ENCODE measurements at regions of chr1 and their contacts with region 1.

Region 1: DNA sequence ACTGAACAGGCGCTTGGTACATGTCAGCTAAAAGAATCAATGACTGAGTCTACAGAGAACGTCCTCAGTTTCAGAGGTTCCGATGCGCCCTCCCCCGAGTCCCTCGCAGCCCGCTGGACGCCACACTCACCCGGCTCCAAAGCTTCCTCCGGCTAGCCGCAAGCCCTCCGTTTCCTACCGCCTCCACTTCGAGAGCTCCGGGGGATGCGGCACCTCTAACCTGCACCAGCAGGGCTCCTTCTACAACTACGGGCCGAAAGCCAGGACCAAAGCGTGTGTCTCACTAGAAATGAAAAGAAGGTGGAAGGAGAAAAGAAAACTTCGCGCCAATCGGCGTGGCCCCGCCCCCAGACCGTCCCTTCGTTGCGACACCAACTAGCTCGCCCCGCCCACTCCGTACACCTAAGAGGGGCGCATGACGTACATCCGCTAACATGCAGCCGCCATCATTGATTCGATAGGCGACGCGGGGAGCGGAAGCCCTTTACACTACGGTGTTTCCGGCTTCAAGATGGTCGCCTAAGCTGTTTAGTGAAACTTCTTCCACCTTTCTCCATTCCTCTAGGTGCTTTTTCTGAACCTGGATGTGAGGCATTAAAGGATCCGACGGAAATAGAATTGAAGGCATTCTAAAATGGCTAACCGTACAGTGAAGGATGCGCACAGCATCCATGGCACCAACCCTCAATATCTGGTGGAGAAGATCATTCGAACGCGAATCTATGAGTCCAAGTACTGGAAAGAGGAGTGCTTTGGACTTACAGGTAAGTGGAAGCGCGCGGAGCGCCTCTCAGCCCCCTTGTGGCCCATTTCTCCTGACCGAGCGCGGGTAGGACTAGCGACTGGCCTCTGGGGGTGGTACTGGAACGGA is at the starts of genes ORC1 and PRPF38A:
- DNase-seq: peak; percentile 96 to 100
- ATAC-seq: peak; percentile 92 to 97 (median 94)
- H3K4me3 ChIP-seq: peak within 1 kb of the TSS; percentile 72
- H3K4me3 Mint-ChIP-seq: peak within 1 kb of the TSS; percentile 100
- H3K27ac ChIP-seq: peak within 1 kb of the TSS; percentile 87
- H3K27ac Mint-ChIP-seq: peak within 1 kb of the TSS; percentile 95 to 98
- H3K4me1 ChIP-seq: peaks cover 10% of the 10 kb centered on the region
- H3K4me1 Mint-ChIP-seq: peaks cover 34 to 50% of the 10 kb centered on the region in 2 donors
- H3K27me3 ChIP-seq: no peaks in the 10 kb centered on the region
- H3K27me3 Mint-ChIP-seq: no peaks in the 10 kb centered on the region
- CTCF ChIP-seq: peak; percentile 47
- total RNA-seq, gene ORC1: 1.9 to 2.6 (median 2.1) TPM
- total RNA-seq, gene PRPF38A: 73.9 to 97.2 (median 95.4) TPM

Region 2: GRCh38 chr1:52365746-52366516 is 38.4 kb before region 1 on chr1 and contains the start of gene CC2D1B:
- intact Hi-C with region 1: loop called (anchors 1 kb)
- DNase-seq: peak; percentile 99 to 100
- ATAC-seq: peak; percentile 86 to 96 (median 91)
- H3K4me3 ChIP-seq: peak within 1 kb of the TSS; percentile 75
- H3K4me3 Mint-ChIP-seq: peak within 1 kb of the TSS; percentile 90
- H3K27ac ChIP-seq: peak within 1 kb of the TSS; percentile 92
- H3K27ac Mint-ChIP-seq: peak within 1 kb of the TSS; percentile 95 to 99
- H3K4me1 ChIP-seq: peaks cover 30% of the 10 kb centered on the region
- H3K4me1 Mint-ChIP-seq: peaks cover 15 to 39% of the 10 kb centered on the region in 2 donors
- H3K27me3 ChIP-seq: no peaks in the 10 kb centered on the region
- H3K27me3 Mint-ChIP-seq: peaks cover 0 to 4% of the 10 kb centered on the region in 2 donors
- CTCF ChIP-seq: no peak
- total RNA-seq, gene CC2D1B: 61.4 to 78.4 (median 68.8) TPM

Region 3: DNA sequence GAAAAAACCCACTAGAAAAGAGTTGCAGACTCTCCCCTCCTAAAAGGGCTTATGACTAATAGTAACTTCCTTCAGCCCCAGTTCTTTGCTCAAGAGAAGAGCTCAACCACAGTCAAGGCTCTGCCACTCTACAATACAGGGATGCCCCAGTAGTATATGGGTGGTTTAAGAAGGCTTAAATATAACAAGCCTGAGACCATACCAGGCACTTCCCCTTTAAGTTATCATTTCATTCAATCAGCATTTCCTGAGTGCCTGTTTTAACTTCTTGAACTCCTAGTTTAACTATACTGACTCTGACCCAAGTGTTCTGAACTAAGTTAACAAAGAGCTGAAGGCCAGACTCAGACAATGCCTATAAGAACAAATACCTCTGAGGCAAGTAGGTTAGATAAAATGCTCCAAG is 19.9 kb after region 1 on chr1:
- intact Hi-C with region 1: loop called (anchors 1 kb)
- DNase-seq: peak in 1 of 2 donors; percentile 76
- ATAC-seq: peak; percentile 82 to 90 (median 82)
- H3K4me3 ChIP-seq: no peak overlapping the region
- H3K4me3 Mint-ChIP-seq: peak overlapping the region; percentile 85
- H3K27ac ChIP-seq: peak overlapping the region; percentile 82
- H3K27ac Mint-ChIP-seq: peak overlapping the region; percentile 86 to 98
- H3K4me1 ChIP-seq: peaks cover 9% of the 10 kb centered on the region
- H3K4me1 Mint-ChIP-seq: peaks cover 16 to 26% of the 10 kb centered on the region in 2 donors
- H3K27me3 ChIP-seq: no peaks in the 10 kb centered on the region
- H3K27me3 Mint-ChIP-seq: no peaks in the 10 kb centered on the region
- CTCF ChIP-seq: no peak

Region 4: GRCh38 chr1:52552505-52553361 is 148.4 kb after region 1 on chr1 and contains the start of gene TUT4:
- intact Hi-C with region 1: loop called (anchors 1 kb)
- DNase-seq: peak; percentile 60 to 85
- ATAC-seq: peak; percentile 41 to 62 (median 51)
- H3K4me3 ChIP-seq: peak within 1 kb of the TSS; percentile 99
- H3K4me3 Mint-ChIP-seq: no peak within 1 kb of the TSS
- H3K27ac ChIP-seq: peak within 1 kb of the TSS; percentile 95
- H3K27ac Mint-ChIP-seq: peak within 1 kb of the TSS in 1 of 2 donors; percentile 72
- H3K4me1 ChIP-seq: peaks cover 13% of the 10 kb centered on the region
- H3K4me1 Mint-ChIP-seq: peaks cover 19 to 24% of the 10 kb centered on the region in 2 donors
- H3K27me3 ChIP-seq: no peaks in the 10 kb centered on the region
- H3K27me3 Mint-ChIP-seq: no peaks in the 10 kb centered on the region
- CTCF ChIP-seq: no peak
- total RNA-seq, gene TUT4: 124 to 156 (median 125) TPM

Region 5: GRCh38 chr1:52636721-52637695 is 232.7 kb after region 1 on chr1:
- intact Hi-C with region 1: loop called (anchors 1 kb)
- DNase-seq: peak; percentile 56 to 87
- ATAC-seq: peak; percentile 49 to 80 (median 72)
- H3K4me3 ChIP-seq: no peak overlapping the region
- H3K4me3 Mint-ChIP-seq: peak overlapping the region; percentile 82
- H3K27ac ChIP-seq: peak overlapping the region; percentile 97
- H3K27ac Mint-ChIP-seq: peak overlapping the region; percentile 96 to 98
- H3K4me1 ChIP-seq: peaks cover 83% of the 10 kb centered on the region
- H3K4me1 Mint-ChIP-seq: peaks cover 76 to 88% of the 10 kb centered on the region in 2 donors
- H3K27me3 ChIP-seq: no peaks in the 10 kb centered on the region
- H3K27me3 Mint-ChIP-seq: no peaks in the 10 kb centered on the region
- CTCF ChIP-seq: no peak

Region 6: DNA sequence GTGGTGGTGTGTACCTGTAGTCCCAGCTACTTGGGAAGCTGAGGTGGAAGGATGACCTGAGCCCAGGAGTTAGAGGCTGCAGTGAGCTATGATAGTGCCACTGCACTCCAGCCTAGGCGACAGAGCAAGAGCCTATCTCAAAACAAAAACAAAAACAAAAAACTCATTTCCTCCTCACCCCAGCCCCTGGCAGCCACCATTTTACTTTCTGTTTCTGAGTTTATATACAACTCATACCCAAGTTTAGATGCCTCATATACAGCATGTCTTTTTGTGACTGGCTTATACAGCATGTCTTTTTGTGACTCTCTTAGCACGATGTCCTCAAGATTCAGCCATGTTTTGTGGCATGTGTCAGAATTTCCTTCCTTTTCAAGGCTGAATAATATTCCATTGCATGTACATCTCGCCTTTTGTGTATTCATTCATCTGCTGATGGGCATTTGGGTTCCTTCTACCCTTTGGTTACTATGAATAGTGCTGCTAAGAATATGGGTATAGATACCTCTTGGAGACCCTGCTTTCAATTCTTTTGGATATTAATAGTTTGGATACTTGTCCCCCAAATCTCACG is 279.1 kb after region 1 on chr1:
- intact Hi-C with region 1: loop called (anchors 5 kb)
- DNase-seq: no peak
- ATAC-seq: no peak
- H3K4me3 ChIP-seq: no peak overlapping the region
- H3K4me3 Mint-ChIP-seq: no peak overlapping the region
- H3K27ac ChIP-seq: no peak overlapping the region
- H3K27ac Mint-ChIP-seq: peak overlapping the region in 1 of 2 donors; percentile 28
- H3K4me1 ChIP-seq: peaks cover 11% of the 10 kb centered on the region
- H3K4me1 Mint-ChIP-seq: peaks cover 7 to 14% of the 10 kb centered on the region in 2 donors
- H3K27me3 ChIP-seq: no peaks in the 10 kb centered on the region
- H3K27me3 Mint-ChIP-seq: no peaks in the 10 kb centered on the region
- CTCF ChIP-seq: no peak

Region 7: DNA sequence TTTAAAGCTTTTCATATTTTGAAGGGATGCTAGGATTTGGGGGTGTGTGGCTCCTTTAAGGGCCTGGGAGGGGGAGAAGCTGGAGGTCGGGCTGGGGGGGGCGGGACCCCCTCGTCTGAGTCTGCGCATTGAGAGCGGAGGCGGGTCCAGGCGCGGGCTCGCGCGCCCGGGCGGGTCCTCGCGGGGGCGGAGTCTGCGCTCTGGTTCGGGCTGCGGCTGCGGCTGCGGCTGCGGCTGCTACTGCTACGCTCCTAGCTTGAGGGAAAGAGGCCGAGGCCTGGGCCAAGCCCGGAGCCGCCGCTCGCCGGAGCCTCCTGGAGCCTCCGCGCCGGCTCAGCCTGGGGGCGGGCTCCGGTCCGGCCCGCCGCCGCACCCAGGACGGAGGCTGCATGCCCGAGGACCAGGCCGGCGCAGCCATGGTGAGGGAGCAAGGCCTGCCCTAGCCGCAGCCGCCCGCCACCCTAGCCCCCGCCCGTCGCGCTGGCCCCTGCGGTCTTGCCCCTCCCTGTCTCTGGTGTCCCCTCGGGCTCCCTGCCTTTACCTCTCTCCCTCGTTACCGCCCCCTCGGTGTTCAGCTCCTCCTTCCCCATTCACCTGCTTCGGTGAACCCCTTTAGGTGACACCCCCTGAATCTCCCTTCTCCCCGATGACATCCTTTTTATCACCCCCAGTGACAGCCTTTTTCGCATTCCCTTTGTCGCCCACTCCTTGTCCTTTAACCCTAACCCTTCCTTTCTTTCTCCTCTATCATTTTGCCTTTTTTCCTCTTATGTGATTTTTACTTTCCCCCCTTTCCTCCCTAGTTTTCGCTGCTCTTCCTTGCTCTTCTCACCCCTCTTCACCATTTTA is 322.1 kb after region 1 on chr1 and contains the start of gene ZYG11B:
- intact Hi-C with region 1: loop called (anchors 1 kb)
- DNase-seq: peak; percentile 89 to 95
- ATAC-seq: peak; percentile 93 to 96 (median 95)
- H3K4me3 ChIP-seq: peak within 1 kb of the TSS; percentile 74
- H3K4me3 Mint-ChIP-seq: peak within 1 kb of the TSS; percentile 89
- H3K27ac ChIP-seq: peak within 1 kb of the TSS; percentile 26
- H3K27ac Mint-ChIP-seq: peak within 1 kb of the TSS; percentile 14 to 93
- H3K4me1 ChIP-seq: peaks cover 12% of the 10 kb centered on the region
- H3K4me1 Mint-ChIP-seq: peaks cover 23 to 29% of the 10 kb centered on the region in 2 donors
- H3K27me3 ChIP-seq: no peaks in the 10 kb centered on the region
- H3K27me3 Mint-ChIP-seq: peaks cover 0 to 10% of the 10 kb centered on the region in 2 donors
- CTCF ChIP-seq: no peak
- total RNA-seq, gene ZYG11B: 7.4 to 11.8 (median 10.7) TPM